AG04449 (cell line): ENCODE measurements at regions of chr5 and their contacts with region 1.

Region 1: GRCh38 chr5:53109443-53110127 is at the start of gene MOCS2:
- DNase-seq: no peak
- H3K4me3 ChIP-seq: peak within 1 kb of the TSS; percentile 84
- CTCF ChIP-seq: no peak

Region 2: GRCh38 chr5:52725065-52725746 is 384.4 kb before region 1 on chr5:
- CTCF ChIA-PET with region 1: no interaction called
- POLR2A ChIA-PET with region 1: no interaction called
- DNase-seq: no peak
- H3K4me3 ChIP-seq: no peak overlapping the region
- CTCF ChIP-seq: no peak

Region 3: DNA sequence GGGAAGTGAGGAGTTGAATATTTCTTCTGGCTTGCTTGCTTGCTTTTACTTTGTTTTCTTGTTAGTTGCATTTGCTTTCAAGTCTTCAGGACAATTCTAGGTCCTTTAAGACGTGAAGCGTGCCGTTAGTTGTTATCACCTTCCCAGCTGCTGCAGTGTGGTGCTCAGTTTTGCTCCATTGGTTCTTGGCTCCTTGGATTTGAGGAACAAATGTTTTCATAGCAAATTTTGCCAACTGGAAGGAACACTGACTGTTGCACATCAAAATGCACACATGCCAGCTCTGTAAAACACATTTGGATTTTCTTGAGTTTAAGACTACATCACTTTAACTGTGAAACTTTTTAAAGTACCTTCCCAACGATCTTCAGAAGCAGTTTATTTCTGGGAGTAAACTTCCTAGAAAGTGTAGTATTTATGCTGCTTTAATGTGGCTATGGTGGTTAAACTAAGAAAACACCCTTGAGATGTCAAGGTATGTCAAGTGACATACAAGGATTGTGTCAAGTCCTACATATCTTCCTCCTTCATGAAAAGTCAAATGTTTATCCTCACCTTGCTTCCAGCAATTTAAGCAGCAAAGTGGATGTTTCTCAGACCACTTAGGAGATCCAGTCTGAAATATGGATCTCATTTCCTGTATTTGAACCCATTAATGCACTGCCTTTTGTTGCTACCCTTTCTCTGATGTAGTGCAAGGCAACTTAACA is 24.9 kb before region 1 on chr5:
- CTCF ChIA-PET with region 1: no interaction called
- POLR2A ChIA-PET with region 1: no interaction called
- DNase-seq: no peak
- H3K4me3 ChIP-seq: no peak overlapping the region
- CTCF ChIP-seq: no peak

Region 4: GRCh38 chr5:53095931-53096525 is 13.6 kb before region 1 on chr5:
- CTCF ChIA-PET with region 1: interaction called, 26 read pairs
- POLR2A ChIA-PET with region 1: no interaction called
- DNase-seq: no peak
- H3K4me3 ChIP-seq: no peak overlapping the region
- CTCF ChIP-seq: peak; percentile 65

Region 5: GRCh38 chr5:53123702-53124101 is 14.1 kb after region 1 on chr5:
- CTCF ChIA-PET with region 1: interaction called, 11 read pairs
- POLR2A ChIA-PET with region 1: interaction called, 4 read pairs
- DNase-seq: no peak
- H3K4me3 ChIP-seq: no peak overlapping the region
- CTCF ChIP-seq: no peak